ENCODE measurements at regions of chr4 and their contacts with region 1.

Region 1: DNA sequence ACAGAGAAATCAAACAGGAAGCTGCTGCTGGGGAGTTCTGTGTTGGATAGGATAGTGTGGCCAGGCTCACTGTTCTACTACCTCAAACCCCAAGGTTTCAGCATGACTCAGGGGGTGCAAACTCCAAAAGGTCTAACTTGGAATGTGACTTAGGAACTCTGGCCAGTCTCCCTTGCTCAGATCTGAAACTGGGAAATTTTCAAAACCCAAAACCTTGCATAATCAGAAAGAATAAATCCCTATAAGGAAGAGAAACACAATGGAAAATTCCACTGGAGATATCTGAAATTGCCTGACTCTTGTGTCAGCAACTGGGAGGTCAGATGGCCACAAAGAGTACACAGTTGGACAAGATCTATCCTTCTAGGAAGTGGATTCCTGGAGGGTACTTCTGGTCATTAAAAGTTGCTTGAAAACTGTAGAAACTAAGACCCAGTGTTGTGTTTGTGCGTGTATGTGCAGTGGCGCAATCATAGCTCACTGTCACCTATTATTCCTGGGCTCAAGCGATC is 58.0 kb downstream of the PPEF2 start:
- DNase-seq: no peak
- ATAC-seq: no peak
- H3K4me3 ChIP-seq: no peak overlapping the region
- H3K27ac ChIP-seq: no peak overlapping the region
- H3K4me1 ChIP-seq: peaks cover 11 to 12% of the 10 kb centered on the region in 2 donors
- H3K27me3 ChIP-seq: no peaks in the 10 kb centered on the region
- CTCF ChIP-seq: no peak
- POLR2A ChIP-seq: no peak

Region 2: GRCh38 chr4:75630174-75630936 is 213.9 kb before region 1 on chr4 and contains the start of gene CDKL2:
- in situ Hi-C with region 1: no loop called
- intact Hi-C with region 1: loop called (anchors 10 kb)
- DNase-seq: peak; percentile 47 to 68
- ATAC-seq: peak; percentile 57 to 77
- H3K4me3 ChIP-seq: peak within 1 kb of the TSS; percentile 57 to 74 (median 62)
- H3K27ac ChIP-seq: no peak within 1 kb of the TSS
- H3K4me1 ChIP-seq: peaks cover 3% of the 10 kb centered on the region in 2 donors
- H3K27me3 ChIP-seq: no peaks in the 10 kb centered on the region
- CTCF ChIP-seq: no peak
- POLR2A ChIP-seq: no peak
- total RNA-seq, gene CDKL2: not detected

Measured in gastrocnemius medialis (tissue), 4 donors.